ENCODE measurements at regions of chr10 and their contacts with region 1.

Region 1: GRCh38 chr10:88769384-88769783 is 9.6 kb downstream of the LIPN start:
- DNase-seq: no peak
- H3K4me3 ChIP-seq: no peak overlapping the region
- H3K27ac ChIP-seq: no peak overlapping the region
- H3K4me1 ChIP-seq: peaks cover 0 to 4% (median 0%) of the 10 kb centered on the region in 4 experiments; a peak in 2 of 7 replicates
- H3K27me3 ChIP-seq: no peaks in the 10 kb centered on the region
- CTCF ChIP-seq: no peak
- EP300 ChIP-seq: no peak
- POLR2A ChIP-seq: no peak
- RAD21 ChIP-seq: no peak

Region 2: DNA sequence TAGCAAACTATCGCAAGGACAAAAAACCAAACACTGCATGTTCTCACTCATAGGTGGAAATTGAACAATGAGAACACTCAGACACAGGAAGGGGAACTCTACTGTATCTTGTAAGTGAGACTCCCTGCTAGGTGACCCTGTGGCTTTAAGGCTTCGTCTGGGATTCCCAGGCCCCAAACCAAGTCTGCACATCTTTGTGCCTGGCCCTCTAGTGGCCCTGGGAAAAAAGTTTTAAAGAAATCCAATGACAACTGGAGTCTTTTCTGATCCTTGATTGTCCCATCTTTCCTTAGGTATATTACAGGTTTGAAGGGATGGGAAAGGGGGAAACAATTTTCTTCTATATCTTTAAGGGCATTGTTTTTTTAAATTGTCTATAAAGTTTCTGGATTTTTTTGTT is 22.5 kb after region 1 on chr10:
- CTCF ChIA-PET with region 1: interaction called, 10 read pairs
- POLR2A ChIA-PET with region 1: no interaction called
- DNase-seq: no peak
- H3K4me3 ChIP-seq: no peak overlapping the region
- H3K27ac ChIP-seq: no peak overlapping the region
- H3K4me1 ChIP-seq: no peaks in the 10 kb centered on the region
- H3K27me3 ChIP-seq: no peaks in the 10 kb centered on the region
- CTCF ChIP-seq: peak; percentile 44 to 78 (median 65)
- EP300 ChIP-seq: no peak
- POLR2A ChIP-seq: no peak
- RAD21 ChIP-seq: peak; percentile 58 to 60

Measured in H1 (cell line).